ENCODE measurements at regions of chr10 and their contacts with region 1.

Region 1: GRCh38 chr10:60778214-60779029 is at the start of gene CDK1:
- DNase-seq: peak; percentile 98
- H3K4me3 Mint-ChIP-seq: peak within 1 kb of the TSS; percentile 91
- H3K27ac Mint-ChIP-seq: peak within 1 kb of the TSS; percentile 92
- H3K4me1 Mint-ChIP-seq: peaks cover 19% of the 10 kb centered on the region
- H3K27me3 Mint-ChIP-seq: no peaks in the 10 kb centered on the region
- total RNA-seq, gene CDK1: 153 TPM

Region 2: DNA sequence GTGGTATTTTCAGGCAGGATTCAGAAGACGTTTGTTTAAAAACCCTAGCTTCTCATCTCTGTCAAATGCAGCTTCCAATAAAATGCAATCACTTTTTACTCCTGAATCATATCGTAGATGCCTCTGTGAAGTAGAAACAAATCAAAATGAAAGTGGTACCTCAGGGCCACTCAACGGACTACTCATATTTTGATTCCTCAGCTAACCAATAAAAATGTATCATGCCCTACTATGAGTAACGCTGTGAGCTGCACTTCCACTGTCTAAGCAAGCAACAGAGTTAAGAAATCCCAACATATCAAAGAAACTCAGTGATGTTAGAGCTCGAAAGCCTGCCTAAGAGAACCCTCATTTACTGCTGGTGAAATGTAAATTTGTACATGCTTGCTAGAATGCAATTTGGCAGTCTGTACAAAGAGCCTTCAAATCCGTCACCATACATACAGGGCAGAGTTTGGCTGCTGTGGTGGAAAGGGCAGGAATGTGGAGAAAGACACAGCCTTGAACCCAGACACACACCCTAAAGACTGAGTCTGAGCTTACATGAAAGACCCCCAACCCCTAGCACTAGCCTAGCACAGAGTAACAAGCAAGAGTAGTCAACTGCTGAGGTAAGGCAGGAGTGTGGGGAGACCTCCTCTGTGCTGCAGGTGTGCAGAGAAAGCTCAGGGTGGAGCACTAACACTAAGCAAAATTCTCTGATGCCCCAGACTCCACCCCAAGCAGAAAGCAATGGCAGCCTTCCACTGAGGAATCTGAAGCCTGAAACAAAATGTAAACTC is 540.3 kb before region 1 on chr10:
- CTCF ChIA-PET with region 1: interaction called, 3 read pairs
- POLR2A ChIA-PET with region 1: no interaction called
- intact Hi-C with region 1: loop called (anchors 1 kb)
- DNase-seq: peak; percentile 26
- H3K4me3 Mint-ChIP-seq: no peak overlapping the region
- H3K27ac Mint-ChIP-seq: peak overlapping the region; percentile 50
- H3K4me1 Mint-ChIP-seq: peaks cover 31% of the 10 kb centered on the region
- H3K27me3 Mint-ChIP-seq: no peaks in the 10 kb centered on the region

Region 3: GRCh38 chr10:60572511-60573194 is 205.8 kb before region 1 on chr10:
- CTCF ChIA-PET with region 1: no interaction called
- POLR2A ChIA-PET with region 1: no interaction called
- intact Hi-C with region 1: loop called (anchors 5 kb)
- DNase-seq: peak; percentile 51
- H3K4me3 Mint-ChIP-seq: peak overlapping the region; percentile 83
- H3K27ac Mint-ChIP-seq: peak overlapping the region; percentile 87
- H3K4me1 Mint-ChIP-seq: peaks cover 54% of the 10 kb centered on the region
- H3K27me3 Mint-ChIP-seq: no peaks in the 10 kb centered on the region

Region 4: GRCh38 chr10:60795465-60796202 is 17.2 kb after region 1 on chr10:
- CTCF ChIA-PET with region 1: no interaction called
- POLR2A ChIA-PET with region 1: no interaction called
- intact Hi-C with region 1: loop called (anchors 2 kb)
- DNase-seq: no peak
- H3K4me3 Mint-ChIP-seq: no peak overlapping the region
- H3K27ac Mint-ChIP-seq: no peak overlapping the region
- H3K4me1 Mint-ChIP-seq: peaks cover 3% of the 10 kb centered on the region
- H3K27me3 Mint-ChIP-seq: no peaks in the 10 kb centered on the region